Vagina (tissue), 2 donors: ENCODE measurements at regions of chr1 and their contacts with region 1.

Region 1: DNA sequence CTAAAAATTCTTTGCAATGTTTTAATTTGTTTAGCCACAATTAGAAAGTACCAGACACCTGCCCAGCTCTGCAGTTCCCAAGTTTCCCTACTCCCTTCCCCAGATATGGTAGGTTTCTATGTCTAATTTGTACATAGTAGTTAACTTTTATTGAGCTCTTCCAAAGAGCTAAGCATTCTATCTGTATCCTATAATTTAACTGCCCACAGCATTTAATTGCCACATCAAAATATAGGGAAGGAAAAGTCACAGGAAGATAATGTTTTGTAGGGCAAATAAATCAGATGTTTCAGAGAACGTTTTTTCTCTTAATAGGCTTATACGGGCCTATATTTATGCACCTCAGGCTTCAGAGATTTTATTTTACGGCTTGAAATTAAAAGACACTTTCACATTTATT is 15.7 kb upstream of the FMO3 start:
- DNase-seq: no peak
- H3K4me3 ChIP-seq: no peak overlapping the region
- H3K27ac ChIP-seq: no peak overlapping the region
- H3K4me1 ChIP-seq: no peaks in the 10 kb centered on the region
- H3K27me3 ChIP-seq: no peaks in the 10 kb centered on the region
- CTCF ChIP-seq: no peak
- POLR2A ChIP-seq: no peak

Region 2: DNA sequence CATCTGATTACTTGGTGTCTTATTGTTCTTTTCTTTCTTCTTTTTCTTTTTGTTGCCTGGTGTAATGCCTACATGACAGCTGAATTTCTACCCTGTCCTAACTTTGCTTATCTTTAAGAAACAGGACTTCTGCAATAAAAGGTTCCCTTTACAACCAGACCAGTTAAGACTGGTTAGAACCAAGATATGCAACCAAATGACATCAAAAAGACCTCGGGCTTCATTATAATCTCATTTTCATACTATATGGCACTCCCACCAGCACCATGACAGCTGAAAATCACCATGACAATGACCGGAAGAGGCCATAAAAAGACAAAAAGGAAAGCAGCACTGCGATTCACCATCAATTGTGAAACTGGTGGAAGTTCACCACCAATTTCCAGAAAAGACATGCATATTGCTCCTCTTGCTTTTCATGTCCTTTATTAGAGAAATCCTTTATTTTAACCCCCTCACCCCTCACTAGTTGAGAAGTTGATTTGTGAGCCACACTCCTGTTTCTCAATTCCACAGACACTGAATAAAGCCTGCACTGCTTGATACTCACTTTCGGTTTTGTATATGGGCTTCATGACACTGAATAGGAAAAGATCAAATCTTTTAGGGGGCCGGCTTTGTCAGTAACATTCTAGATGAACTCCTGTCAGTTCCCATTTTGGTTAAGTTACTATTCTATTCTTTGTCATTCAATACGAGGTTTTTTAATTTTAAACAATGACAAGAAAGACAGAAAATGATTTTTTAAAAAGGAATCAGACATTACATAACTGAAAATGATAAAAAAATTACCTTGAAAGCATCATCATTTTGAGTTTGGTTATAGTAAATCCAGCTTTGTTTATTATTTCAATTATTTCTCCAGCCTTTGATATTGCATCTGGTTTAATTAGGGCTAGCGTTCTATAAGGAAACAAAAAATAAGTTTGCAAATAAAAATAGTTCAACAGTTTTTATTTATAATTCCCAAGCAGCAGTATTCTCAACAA is 1765.6 kb before region 1 on chr1:
- intact Hi-C with region 1: loop called (anchors 5 kb)
- DNase-seq: no peak
- H3K4me3 ChIP-seq: no peak overlapping the region
- H3K27ac ChIP-seq: no peak overlapping the region
- H3K4me1 ChIP-seq: no peaks in the 10 kb centered on the region
- H3K27me3 ChIP-seq: no peaks in the 10 kb centered on the region
- CTCF ChIP-seq: no peak
- POLR2A ChIP-seq: no peak

Region 3: GRCh38 chr1:171226747-171227370 is 151.8 kb after region 1 on chr1:
- intact Hi-C with region 1: loop called (anchors 5 kb)
- DNase-seq: no peak
- H3K4me3 ChIP-seq: no peak overlapping the region
- H3K27ac ChIP-seq: no peak overlapping the region
- H3K4me1 ChIP-seq: peaks cover 19% of the 10 kb centered on the region
- H3K27me3 ChIP-seq: no peaks in the 10 kb centered on the region
- CTCF ChIP-seq: peak; percentile 61 to 85 (median 64)
- POLR2A ChIP-seq: no peak